ENCODE measurements at regions of chr22 and their contacts with region 1.

Region 1: DNA sequence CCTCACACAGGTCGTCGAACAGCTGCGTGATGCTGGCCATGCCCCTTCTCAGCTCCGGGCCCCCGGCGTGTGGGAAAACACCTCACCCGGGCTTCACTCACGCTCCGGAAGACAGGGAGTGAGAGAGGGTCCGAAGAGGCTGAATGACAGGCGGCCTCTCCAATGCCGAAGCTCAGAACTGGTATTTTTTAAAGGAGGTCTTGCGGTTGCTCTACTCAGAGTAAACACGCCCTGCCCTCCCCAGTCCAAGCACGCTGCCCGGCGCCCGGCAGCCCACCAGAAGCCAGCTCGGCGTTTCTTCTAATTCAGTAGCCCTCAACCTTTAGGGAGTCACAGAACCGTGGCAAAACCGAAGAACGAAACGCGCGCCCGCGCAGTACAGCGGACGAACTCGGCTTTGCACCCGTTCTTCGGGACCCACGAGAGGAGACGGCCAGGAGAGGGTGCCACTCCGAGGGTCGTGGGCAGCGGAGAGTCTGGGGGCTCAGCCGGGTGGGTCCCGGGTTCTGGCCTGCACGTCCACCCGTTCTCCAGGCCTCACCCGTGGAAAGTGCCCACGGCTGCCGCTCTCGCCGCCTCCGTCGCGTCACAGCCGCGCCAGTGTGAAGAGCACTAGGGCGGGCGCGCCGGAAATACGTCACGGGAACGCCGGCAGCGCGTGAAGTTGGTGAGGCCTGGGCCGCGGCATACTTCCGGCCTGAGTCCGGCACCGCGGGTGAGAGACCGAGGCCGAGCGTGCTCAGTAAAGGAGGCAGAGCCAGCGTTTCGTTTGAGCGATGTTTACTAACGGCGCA is at the start of gene TUBGCP6:
- DNase-seq: peak; percentile 99
- H3K4me3 ChIP-seq: peak within 1 kb of the TSS; percentile 79 to 96 (median 91)
- H3K27ac ChIP-seq: peak within 1 kb of the TSS; percentile 82 to 98 (median 94)
- H3K4me1 ChIP-seq: peaks cover 48 to 94% (median 81%) of the 10 kb centered on the region in 6 donors
- H3K27me3 ChIP-seq: no peaks in the 10 kb centered on the region
- CTCF ChIP-seq: peak in 10 of 11 experiments; percentile 16 to 62 (median 34)
- POLR2A ChIP-seq: peak; percentile 28 to 73 (median 28)
- total RNA-seq, gene TUBGCP6: 65.2 to 98.0 (median 69.4) TPM

Region 2: DNA sequence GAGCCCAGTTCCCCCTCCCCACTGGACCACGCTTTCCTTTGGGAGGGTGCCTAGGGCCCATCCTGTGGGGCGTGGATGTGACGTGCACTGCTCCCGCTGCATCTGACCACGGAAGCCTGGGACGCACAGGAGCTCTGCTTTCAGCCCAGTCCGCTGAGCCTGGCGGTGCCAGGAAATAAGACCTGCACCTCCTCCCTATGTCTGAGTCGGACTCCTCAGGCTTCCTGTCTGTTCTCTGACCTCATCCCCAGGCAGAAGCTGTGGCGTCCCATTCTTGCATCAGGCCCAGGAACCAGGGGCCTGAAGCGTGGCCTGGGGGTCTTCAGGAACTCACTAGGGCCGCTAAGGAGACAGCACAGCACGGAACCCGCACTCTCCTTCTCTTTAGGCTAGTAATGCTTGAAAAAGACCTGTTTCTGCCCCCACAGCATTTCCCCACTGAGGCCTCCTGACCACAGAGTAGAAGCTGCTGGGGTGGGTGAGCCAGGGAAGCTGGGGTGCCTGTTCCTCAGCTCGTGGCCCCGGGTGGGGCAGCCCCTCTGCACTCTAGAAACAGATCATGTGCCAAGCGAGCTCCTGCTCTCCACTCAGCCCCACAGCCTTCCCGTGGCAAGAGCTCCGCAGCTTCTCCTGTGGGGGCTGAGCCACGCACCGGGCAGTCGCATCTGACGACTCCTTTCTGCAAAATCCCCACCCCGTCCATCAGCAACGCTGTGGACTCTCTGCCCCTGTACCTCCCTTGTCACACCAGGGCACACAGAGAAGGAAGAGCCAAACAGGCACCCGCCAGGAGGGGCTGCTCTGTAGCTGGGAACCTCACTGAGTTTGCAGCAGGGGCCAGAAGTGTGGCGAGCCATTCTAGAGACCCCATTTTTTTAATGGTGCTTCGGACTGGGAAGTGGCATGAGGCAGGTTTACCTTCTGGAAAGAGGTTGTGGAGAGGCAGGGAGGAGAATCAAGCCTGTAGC is 132.2 kb before region 1 on chr22:
- intact Hi-C with region 1: no loop called
- DNase-seq: no peak
- H3K4me3 ChIP-seq: no peak overlapping the region
- H3K27ac ChIP-seq: peak overlapping the region in 2 of 8 donors; percentile 23 to 30
- H3K4me1 ChIP-seq: peaks cover 0 to 17% (median 7%) of the 10 kb centered on the region in 6 donors
- H3K27me3 ChIP-seq: peaks cover 0 to 44% (median 0%) of the 10 kb centered on the region in 7 donors
- CTCF ChIP-seq: no peak
- POLR2A ChIP-seq: no peak

Region 3: DNA sequence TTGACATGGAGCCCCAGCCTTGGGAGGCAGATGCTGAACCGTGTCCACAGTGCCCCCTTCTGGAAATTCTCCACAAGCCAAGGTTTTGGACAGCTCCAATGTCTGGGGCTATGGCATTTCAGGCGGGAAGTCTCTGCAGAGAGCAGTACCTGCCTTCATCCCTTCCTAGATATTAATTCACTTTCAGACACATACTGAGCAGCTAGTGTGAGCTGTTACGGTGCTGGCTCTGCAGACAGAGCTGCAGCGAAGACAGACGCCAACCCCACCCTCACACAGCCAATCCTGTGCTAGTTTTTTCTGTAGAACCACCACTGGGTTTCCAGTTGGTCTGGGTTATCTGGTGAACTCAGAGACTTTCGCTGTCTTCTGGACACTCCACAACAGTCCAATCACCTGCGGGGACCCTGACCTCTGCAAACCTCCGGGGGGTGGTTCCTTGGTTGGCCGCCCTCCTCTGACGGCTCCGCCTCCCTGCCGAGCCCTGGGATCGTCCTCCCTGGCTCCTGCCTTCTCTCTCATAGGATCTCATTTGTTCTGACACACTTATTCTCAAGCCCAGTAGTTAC is 253.8 kb after region 1 on chr22:
- intact Hi-C with region 1: loop called (anchors 10 kb)
- DNase-seq: no peak
- H3K4me3 ChIP-seq: no peak overlapping the region
- H3K27ac ChIP-seq: no peak overlapping the region
- H3K4me1 ChIP-seq: peaks cover 0 to 11% (median 7%) of the 10 kb centered on the region in 6 donors
- H3K27me3 ChIP-seq: no peaks in the 10 kb centered on the region
- CTCF ChIP-seq: peak; percentile 49 to 83 (median 71)
- POLR2A ChIP-seq: no peak